ENCODE measurements at regions of chr19 and their contacts with region 1.

Region 1: DNA sequence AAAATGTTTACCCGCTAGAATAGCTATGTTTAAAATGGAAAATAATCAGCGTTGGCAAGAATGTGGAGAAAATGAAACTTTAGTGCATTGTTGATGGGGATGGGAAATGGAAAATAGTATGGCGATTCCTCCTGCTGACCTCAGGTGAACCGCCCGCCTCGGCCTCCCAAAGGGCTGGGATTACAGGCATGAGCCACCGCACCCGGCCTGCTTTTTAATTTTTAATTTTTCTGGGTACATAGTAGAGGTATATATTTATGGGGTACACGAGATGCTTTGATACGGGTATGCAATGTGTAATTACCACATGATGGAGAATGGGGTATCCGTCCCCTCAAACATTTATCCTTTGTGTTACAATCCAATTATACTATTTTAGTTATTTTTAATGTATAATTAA is 7.3 kb upstream of the NLRP8 start:
- DNase-seq: no peak
- H3K4me3 Mint-ChIP-seq: no peak overlapping the region
- H3K27ac Mint-ChIP-seq: no peak overlapping the region
- H3K4me1 Mint-ChIP-seq: no peaks in the 10 kb centered on the region
- H3K27me3 Mint-ChIP-seq: no peaks in the 10 kb centered on the region
- CTCF ChIP-seq: no peak

Region 2: DNA sequence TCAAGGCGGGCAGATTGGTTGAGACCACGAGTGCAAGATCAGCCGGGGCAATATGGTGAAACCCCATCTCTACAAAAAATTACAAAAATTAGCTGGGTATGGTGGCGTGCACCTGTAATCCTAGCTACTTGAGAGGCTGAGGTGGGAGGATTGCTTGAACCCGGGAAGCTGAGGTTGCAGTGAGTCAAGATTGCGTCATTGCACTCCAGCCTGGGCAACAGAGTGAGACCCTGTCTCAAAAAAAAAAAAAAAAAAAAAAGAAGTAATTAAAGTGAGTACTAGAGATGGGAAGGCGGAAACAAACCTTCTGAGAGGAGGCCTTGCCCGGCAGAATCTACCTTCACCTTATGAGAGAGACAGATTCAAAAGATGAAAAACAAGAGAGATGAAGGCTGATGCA is 216.8 kb before region 1 on chr19:
- CTCF ChIA-PET with region 1: interaction called, 10 read pairs
- intact Hi-C with region 1: no loop called
- DNase-seq: no peak
- H3K4me3 Mint-ChIP-seq: no peak overlapping the region
- H3K27ac Mint-ChIP-seq: no peak overlapping the region
- H3K4me1 Mint-ChIP-seq: no peaks in the 10 kb centered on the region
- H3K27me3 Mint-ChIP-seq: peaks cover 40% of the 10 kb centered on the region
- CTCF ChIP-seq: no peak

Measured in Calu3 (cell line).